ENCODE measurements at regions of chr2 and their contacts with region 1.

Region 1: GRCh38 chr2:6352906-6353515 is 512.7 kb downstream of the CMPK2 start:
- DNase-seq: peak; percentile 22 to 66 (median 34)
- H3K4me3 ChIP-seq: no peak overlapping the region
- H3K27ac ChIP-seq: no peak overlapping the region
- H3K4me1 ChIP-seq: no peaks in the 10 kb centered on the region
- H3K27me3 ChIP-seq: no peaks in the 10 kb centered on the region
- CTCF ChIP-seq: peak in 5 of 6 experiments; percentile 20 to 54 (median 47)
- POLR2A ChIP-seq: no peak

Region 2: GRCh38 chr2:6773007-6773693 is 420.1 kb after region 1 on chr2:
- intact Hi-C with region 1: loop called in 1 of 2 experiments (anchors 5 kb)
- DNase-seq: peak; percentile 21 to 68 (median 59)
- H3K4me3 ChIP-seq: no peak overlapping the region
- H3K27ac ChIP-seq: no peak overlapping the region
- H3K4me1 ChIP-seq: peaks cover 0 to 7% of the 10 kb centered on the region in 2 donors
- H3K27me3 ChIP-seq: peaks cover 20% of the 10 kb centered on the region
- CTCF ChIP-seq: peak; percentile 70 to 96 (median 82)
- POLR2A ChIP-seq: no peak

Measured in adrenal gland (tissue), 19 donors.